Sciatic nerve (tissue), 2 donors: ENCODE measurements at regions of chr20 and their contacts with region 1.

Region 1: GRCh38 chr20:50012282-50013263 is 29.8 kb downstream of the SNAI1 start:
- DNase-seq: no peak
- ATAC-seq: no peak

Region 2: GRCh38 chr20:50027611-50028105 is 15.1 kb after region 1 on chr20:
- intact Hi-C with region 1: no loop called
- DNase-seq: peak; percentile 81
- ATAC-seq: peak; percentile 49

Region 3: GRCh38 chr20:50144362-50144761 is 131.8 kb after region 1 on chr20:
- intact Hi-C with region 1: no loop called
- DNase-seq: no peak
- ATAC-seq: peak; percentile 86

Region 4: GRCh38 chr20:50399917-50400704 is 387.5 kb after region 1 on chr20:
- intact Hi-C with region 1: loop called (anchors 5 kb)
- DNase-seq: no peak
- ATAC-seq: no peak